Sigmoid colon (tissue), 7 donors: ENCODE measurements at regions of chr5 and their contacts with region 1.

Region 1: GRCh38 chr5:135671052-135671705 is 92.4 kb upstream of the CXCL14 start:
- DNase-seq: no peak
- H3K4me3 ChIP-seq: no peak overlapping the region
- H3K27ac ChIP-seq: no peak overlapping the region
- H3K4me1 ChIP-seq: no peaks in the 10 kb centered on the region
- H3K27me3 ChIP-seq: no peaks in the 10 kb centered on the region
- CTCF ChIP-seq: no peak
- EP300 ChIP-seq: no peak
- POLR2A ChIP-seq: no peak

Region 2: GRCh38 chr5:134813407-134813806 is 857.8 kb before region 1 on chr5:
- intact Hi-C with region 1: no loop called
- DNase-seq: no peak
- H3K4me3 ChIP-seq: no peak overlapping the region
- H3K27ac ChIP-seq: no peak overlapping the region
- H3K4me1 ChIP-seq: no peaks in the 10 kb centered on the region
- H3K27me3 ChIP-seq: no peaks in the 10 kb centered on the region
- CTCF ChIP-seq: no peak
- EP300 ChIP-seq: no peak
- POLR2A ChIP-seq: no peak

Region 3: DNA sequence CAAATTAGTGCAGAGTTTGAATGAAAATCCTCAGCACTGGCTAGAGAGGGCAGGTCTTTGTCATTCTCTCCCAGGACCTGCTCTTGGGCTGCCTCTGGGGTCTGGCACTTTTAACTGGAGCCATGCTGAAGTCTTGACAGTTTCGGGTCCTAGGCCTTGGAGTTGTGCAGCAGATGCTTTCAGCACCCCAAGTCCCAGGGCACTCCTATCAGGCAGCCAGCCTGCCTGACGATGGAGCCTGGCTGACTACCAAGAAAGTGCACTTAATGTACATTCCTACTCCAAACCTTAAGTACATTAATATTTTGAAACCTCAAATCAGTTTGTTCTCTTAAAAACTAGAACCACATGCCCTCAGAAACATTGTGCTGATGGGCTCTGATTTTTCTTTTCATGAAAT is 23.1 kb before region 1 on chr5:
- intact Hi-C with region 1: loop called (anchors 1 kb)
- DNase-seq: no peak
- H3K4me3 ChIP-seq: no peak overlapping the region
- H3K27ac ChIP-seq: no peak overlapping the region
- H3K4me1 ChIP-seq: peaks cover 0 to 6% (median 2%) of the 10 kb centered on the region in 4 donors
- H3K27me3 ChIP-seq: no peaks in the 10 kb centered on the region
- CTCF ChIP-seq: no peak
- EP300 ChIP-seq: no peak
- POLR2A ChIP-seq: no peak

Region 4: GRCh38 chr5:135895551-135895950 is 224.4 kb after region 1 on chr5 and contains the start of gene IL9:
- intact Hi-C with region 1: no loop called
- DNase-seq: no peak
- H3K4me3 ChIP-seq: no peak within 1 kb of the TSS
- H3K27ac ChIP-seq: no peak within 1 kb of the TSS
- H3K4me1 ChIP-seq: no peaks in the 10 kb centered on the region
- H3K27me3 ChIP-seq: no peaks in the 10 kb centered on the region
- CTCF ChIP-seq: no peak
- EP300 ChIP-seq: no peak
- POLR2A ChIP-seq: no peak
- total RNA-seq, gene IL9: not detected